Gastrocnemius medialis (tissue), 4 donors: ENCODE measurements at regions of chr6 and their contacts with region 1.

Region 1: DNA sequence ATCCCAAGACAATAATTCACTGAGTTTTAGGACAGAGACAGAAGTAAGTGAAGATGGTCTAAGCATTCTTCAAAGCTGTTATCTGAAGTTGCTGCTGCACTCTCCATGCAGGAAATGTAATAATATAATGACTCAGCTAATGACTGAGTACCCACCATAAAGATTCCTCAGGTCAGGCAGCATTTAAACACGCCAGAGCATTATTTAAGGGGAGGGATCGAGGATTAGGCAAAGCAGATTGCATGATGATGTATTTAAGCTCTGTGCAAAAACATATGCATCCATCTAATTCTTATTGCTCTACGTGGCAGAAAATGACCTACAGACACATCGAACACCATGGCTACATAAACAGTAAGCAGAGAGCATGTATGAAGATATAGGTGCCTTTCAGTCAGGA is 216.4 kb downstream of the UNC5CL start:
- DNase-seq: no peak
- ATAC-seq: no peak
- H3K4me3 ChIP-seq: no peak overlapping the region
- H3K27ac ChIP-seq: no peak overlapping the region
- H3K4me1 ChIP-seq: peaks cover 9 to 18% of the 10 kb centered on the region in 2 donors
- H3K27me3 ChIP-seq: no peaks in the 10 kb centered on the region
- CTCF ChIP-seq: no peak
- POLR2A ChIP-seq: no peak

Region 2: DNA sequence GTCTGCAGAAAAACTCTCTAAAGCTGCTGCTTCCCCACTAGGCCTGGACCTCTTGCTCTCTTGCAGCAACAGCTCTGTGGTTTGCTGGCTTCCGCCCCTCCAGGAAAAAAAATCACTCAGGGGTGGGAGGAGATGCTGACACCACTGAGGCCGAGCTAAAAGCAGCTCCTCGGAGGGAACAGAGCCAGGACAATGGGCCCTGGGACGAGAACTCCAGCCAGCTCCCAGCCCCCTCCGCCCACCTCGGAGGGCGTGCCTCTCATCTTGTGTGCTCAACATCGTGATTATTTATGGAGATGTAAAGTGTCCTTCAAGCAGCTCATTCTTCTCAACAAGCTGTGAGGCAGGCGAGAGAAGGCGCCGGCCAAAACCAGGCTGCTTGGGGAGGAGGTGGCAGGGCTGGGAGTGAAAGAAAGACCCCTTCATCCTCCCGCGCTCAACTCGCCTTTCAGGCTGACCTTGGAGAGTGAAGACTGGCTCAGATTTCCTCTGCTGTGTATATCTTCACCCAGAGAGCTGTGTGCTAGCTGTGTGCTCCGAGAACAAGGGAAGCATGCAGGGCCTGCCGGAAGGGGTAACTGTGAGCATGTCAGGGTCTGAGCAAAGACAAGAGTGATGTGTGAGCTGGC is 181.9 kb before region 1 on chr6:
- in situ Hi-C with region 1: no loop called
- intact Hi-C with region 1: no loop called
- DNase-seq: no peak
- ATAC-seq: no peak
- H3K4me3 ChIP-seq: no peak overlapping the region
- H3K27ac ChIP-seq: no peak overlapping the region
- H3K4me1 ChIP-seq: no peaks in the 10 kb centered on the region
- H3K27me3 ChIP-seq: no peaks in the 10 kb centered on the region
- CTCF ChIP-seq: no peak
- POLR2A ChIP-seq: no peak

Region 3: DNA sequence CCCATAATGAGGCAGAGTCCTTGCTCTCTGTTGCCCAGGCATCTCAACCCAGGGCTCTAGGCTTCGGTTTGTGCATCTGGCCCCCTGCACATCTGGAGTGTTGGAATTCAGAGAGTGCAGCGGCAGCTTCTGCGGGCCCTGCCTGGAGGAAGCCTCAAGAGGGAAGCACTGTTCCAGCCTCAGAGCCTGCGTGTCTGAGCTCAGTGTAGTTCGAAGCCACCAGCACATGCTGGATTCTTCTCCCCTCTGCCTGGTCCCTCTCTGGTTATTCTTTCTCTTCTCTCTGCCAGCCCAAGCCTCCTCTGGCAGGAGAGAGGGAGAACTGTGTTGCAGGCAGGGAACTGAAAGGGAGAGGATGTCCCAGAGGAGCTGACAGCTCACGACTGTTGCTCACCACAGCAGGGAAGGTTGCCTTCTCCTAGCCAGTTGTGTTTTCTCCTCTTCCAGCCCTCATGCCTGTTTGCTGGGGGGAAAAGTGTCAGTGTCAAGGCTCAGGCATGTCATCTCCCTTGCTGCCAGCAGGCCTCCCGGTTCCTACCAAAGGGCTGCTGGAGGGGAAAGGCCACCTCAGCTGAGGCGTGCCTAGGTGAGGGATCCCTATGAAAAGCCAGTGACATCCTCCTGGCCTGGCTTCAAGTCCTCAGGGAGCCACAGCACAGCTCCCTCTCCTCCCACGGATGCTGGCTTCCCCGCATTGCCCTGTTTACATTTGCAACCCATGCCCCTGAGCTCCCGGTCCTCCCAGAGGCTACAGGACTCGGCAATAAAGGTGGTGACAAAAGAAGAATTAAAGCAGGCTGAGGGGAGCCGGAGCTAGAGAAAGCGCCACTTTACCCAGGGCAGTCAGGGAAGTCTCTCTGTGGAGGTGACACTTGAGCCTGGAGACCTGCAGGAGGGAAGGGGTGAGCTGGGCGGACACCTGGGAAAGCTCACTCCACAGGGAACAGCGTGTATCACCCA is 109.3 kb before region 1 on chr6:
- in situ Hi-C with region 1: no loop called
- intact Hi-C with region 1: loop called (anchors 5 kb)
- DNase-seq: no peak
- ATAC-seq: no peak
- H3K4me3 ChIP-seq: no peak overlapping the region
- H3K27ac ChIP-seq: no peak overlapping the region
- H3K4me1 ChIP-seq: no peaks in the 10 kb centered on the region
- H3K27me3 ChIP-seq: no peaks in the 10 kb centered on the region
- CTCF ChIP-seq: no peak
- POLR2A ChIP-seq: no peak

Region 4: DNA sequence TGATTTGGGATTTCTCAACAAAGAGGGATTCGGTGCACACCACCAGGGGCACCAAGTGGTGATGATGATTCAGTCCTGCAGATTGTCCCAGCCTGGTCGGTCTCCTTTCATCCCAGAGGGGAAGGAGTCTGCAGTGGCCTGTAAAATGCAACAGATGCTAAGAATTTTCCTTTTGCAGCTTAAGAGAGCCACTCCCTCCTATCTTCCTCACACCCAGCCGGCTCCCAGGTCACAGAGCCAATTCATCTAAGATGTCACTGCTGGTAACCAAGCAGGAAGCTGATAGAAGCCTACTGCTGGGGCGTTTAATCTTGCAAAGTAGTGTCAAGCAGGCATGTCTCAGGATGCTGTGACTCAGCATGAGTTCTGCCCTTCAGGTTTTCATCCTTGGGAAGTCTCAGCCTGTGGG is 31.6 kb before region 1 on chr6:
- in situ Hi-C with region 1: no loop called
- intact Hi-C with region 1: no loop called
- DNase-seq: no peak
- ATAC-seq: no peak
- H3K4me3 ChIP-seq: no peak overlapping the region
- H3K27ac ChIP-seq: no peak overlapping the region
- H3K4me1 ChIP-seq: peaks cover 12 to 16% of the 10 kb centered on the region in 2 donors
- H3K27me3 ChIP-seq: no peaks in the 10 kb centered on the region
- CTCF ChIP-seq: no peak
- POLR2A ChIP-seq: no peak